HepG2 (cell line): ENCODE measurements at regions of chr1 and their contacts with region 1.

Region 1: GRCh38 chr1:100459358-100460114 is 78.4 kb upstream of the GPR88 start:
- DNase-seq: peak; percentile 66
- ATAC-seq: peak; percentile 96
- H3K4me3 ChIP-seq: no peak overlapping the region
- H3K27ac ChIP-seq: no peak overlapping the region
- H3K4me1 ChIP-seq: peaks cover 10% of the 10 kb centered on the region
- H3K27me3 ChIP-seq: no peaks in the 10 kb centered on the region
- CTCF ChIP-seq: peak; percentile 91
- EP300 ChIP-seq: no peak
- POLR2A ChIP-seq: no peak
- RAD21 ChIP-seq: peak; percentile 78

Region 2: DNA sequence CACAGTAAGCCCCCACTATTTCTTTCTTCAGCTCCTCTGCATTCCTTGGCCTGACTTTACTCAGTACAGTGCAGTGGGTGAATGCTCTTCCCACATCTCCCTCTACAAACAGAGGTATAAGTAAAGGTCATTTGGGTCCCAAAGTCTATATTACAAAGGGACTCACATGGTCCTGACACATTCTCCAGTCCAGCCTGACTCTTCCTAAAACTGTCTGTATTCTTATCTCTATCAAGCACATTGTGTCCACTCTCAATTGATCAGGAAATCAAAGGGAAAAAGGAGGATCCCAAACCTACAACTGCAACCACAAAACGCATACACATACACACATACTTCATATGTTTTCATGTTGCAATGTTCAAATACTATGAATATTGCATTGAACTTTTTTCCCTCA is 742.5 kb before region 1 on chr1:
- CTCF ChIA-PET with region 1: no interaction called
- POLR2A ChIA-PET with region 1: no interaction called
- in situ Hi-C with region 1: no loop called
- intact Hi-C with region 1: no loop called
- DNase-seq: peak; percentile 15
- ATAC-seq: peak; percentile 82
- H3K4me3 ChIP-seq: no peak overlapping the region
- H3K27ac ChIP-seq: no peak overlapping the region
- H3K4me1 ChIP-seq: peaks cover 16% of the 10 kb centered on the region
- H3K27me3 ChIP-seq: no peaks in the 10 kb centered on the region
- CTCF ChIP-seq: no peak
- EP300 ChIP-seq: no peak
- POLR2A ChIP-seq: no peak
- RAD21 ChIP-seq: no peak

Region 3: GRCh38 chr1:99808391-99809115 is 651.0 kb before region 1 on chr1:
- CTCF ChIA-PET with region 1: interaction called, 11 read pairs
- POLR2A ChIA-PET with region 1: no interaction called
- in situ Hi-C with region 1: loop called (anchors 10 kb)
- intact Hi-C with region 1: loop called (anchors 2 kb)
- DNase-seq: peak; percentile 81
- ATAC-seq: peak; percentile 95
- H3K4me3 ChIP-seq: peak overlapping the region; percentile 17 to 30 (median 24); a peak in 2 of 6 replicates
- H3K27ac ChIP-seq: no peak overlapping the region
- H3K4me1 ChIP-seq: peaks cover 13% of the 10 kb centered on the region; the same call in 1 of the 2 replicates
- H3K27me3 ChIP-seq: no peaks in the 10 kb centered on the region
- CTCF ChIP-seq: peak; percentile 85
- EP300 ChIP-seq: no peak
- POLR2A ChIP-seq: no peak
- RAD21 ChIP-seq: peak; percentile 81

Region 4: DNA sequence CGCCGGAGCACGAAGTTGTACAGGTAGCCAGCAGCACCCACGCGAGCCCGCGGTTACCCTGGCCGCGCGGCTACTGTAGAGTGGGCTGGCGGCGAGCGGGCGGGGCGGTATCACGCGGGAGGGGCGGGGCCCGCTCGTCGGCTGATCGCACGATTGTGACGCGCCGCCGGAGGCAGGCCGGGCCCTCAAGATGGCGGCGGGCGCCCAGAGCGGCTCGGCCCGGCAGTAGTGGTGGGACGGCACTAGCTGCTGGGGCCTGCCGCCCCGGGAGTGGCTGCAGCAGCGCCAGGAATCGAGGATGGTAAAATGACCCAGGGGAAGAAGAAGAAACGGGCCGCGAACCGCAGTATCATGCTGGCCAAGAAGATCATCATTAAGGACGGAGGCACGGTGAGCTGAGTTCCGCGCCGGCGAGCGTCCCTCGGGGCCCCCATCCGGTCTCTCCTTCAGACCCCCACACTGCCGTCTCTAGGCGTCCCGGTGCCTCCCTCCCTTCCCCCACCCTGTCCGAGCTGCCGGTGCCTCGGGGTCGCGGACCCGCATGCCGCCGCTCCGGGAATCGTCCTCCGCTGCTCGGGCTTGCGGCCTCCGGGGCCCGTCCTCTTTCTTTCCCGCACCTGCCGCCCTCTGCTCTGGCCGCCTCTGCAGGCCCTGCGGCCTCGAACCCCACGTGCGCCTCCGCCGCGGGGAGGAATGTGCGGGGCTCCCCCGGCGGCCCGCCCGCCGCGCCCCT is 421.4 kb before region 1 on chr1:
- CTCF ChIA-PET with region 1: no interaction called
- POLR2A ChIA-PET with region 1: no interaction called
- in situ Hi-C with region 1: no loop called
- intact Hi-C with region 1: loop called (anchors 1 kb)
- DNase-seq: peak; percentile 57
- ATAC-seq: peak; percentile 93
- H3K4me3 ChIP-seq: peak overlapping the region; percentile 91 to 99 (median 97)
- H3K27ac ChIP-seq: peak overlapping the region; percentile 94
- H3K4me1 ChIP-seq: peaks cover 58% of the 10 kb centered on the region
- H3K27me3 ChIP-seq: no peaks in the 10 kb centered on the region; a peak in 1 of 5 replicates
- CTCF ChIP-seq: no peak
- EP300 ChIP-seq: peak in 1 of 2 experiments; percentile 6; a peak in 1 of 4 replicates
- POLR2A ChIP-seq: peak; percentile 94 to 97
- RAD21 ChIP-seq: 0 out of 2 replicates have a peak, but pooled peaks have one; percentile 13

Region 5: GRCh38 chr1:100265931-100266740 is 193.4 kb before region 1 on chr1 and contains the start of gene RTCA:
- CTCF ChIA-PET with region 1: no interaction called
- POLR2A ChIA-PET with region 1: no interaction called
- in situ Hi-C with region 1: loop called (anchors 10 kb)
- intact Hi-C with region 1: loop called (anchors 5 kb)
- DNase-seq: peak; percentile 90
- ATAC-seq: peak; percentile 97
- H3K4me3 ChIP-seq: peak within 1 kb of the TSS; percentile 94 to 99 (median 98)
- H3K27ac ChIP-seq: peak within 1 kb of the TSS; percentile 89
- H3K4me1 ChIP-seq: peaks cover 39% of the 10 kb centered on the region
- H3K27me3 ChIP-seq: no peaks in the 10 kb centered on the region; a peak in 1 of 5 replicates
- CTCF ChIP-seq: no peak
- EP300 ChIP-seq: no peak
- POLR2A ChIP-seq: peak; percentile 81 to 84
- RAD21 ChIP-seq: no peak
- total RNA-seq, gene RTCA: 31.0 and 37.7 TPM in 2 replicates

Region 6: DNA sequence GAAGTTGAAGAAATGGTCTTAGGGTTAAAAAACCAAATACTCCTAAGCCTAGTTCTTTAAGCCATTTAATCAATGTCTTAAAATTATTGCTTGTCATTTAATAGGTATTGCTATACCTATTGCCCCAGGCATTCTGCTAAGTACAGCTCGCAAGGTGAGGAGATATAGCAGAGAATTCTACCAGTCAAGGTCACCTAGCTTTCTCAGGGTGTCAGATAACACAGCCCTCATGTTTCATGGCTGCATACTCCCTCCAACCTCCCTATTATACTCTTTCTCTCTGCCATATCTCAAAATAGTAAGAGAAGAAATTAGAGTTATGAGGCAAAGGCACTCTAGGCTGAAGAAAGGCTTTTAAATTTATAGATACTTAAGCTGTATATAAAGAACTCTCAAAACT is 10.0 kb after region 1 on chr1:
- CTCF ChIA-PET with region 1: no interaction called
- POLR2A ChIA-PET with region 1: no interaction called
- in situ Hi-C with region 1: no loop called
- intact Hi-C with region 1: no loop called
- DNase-seq: no peak
- ATAC-seq: no peak
- H3K4me3 ChIP-seq: no peak overlapping the region
- H3K27ac ChIP-seq: no peak overlapping the region
- H3K4me1 ChIP-seq: peaks cover 2% of the 10 kb centered on the region; the same call in 1 of the 2 replicates
- H3K27me3 ChIP-seq: no peaks in the 10 kb centered on the region
- CTCF ChIP-seq: no peak
- EP300 ChIP-seq: no peak
- POLR2A ChIP-seq: no peak
- RAD21 ChIP-seq: no peak

Region 7: DNA sequence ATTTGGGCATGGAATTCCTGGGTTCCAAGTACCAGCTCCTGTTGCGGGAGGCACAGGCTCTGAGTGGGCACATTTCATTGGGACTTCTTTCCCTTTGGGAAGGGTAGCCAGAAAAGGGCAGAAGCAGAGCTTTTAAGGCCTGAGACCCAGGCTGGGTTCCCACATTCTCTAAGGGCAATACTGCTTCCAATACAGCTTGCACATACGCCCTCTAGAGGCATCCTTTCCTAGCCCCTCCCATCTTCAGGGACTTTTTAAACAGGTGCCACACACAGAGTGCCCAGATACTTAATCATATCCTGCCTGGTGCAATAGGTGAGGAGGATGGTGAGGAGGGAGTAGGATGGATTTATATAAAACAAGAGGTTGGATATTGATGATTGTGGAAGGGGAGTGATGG is 84.1 kb after region 1 on chr1:
- CTCF ChIA-PET with region 1: interaction called, 8 read pairs
- POLR2A ChIA-PET with region 1: no interaction called
- in situ Hi-C with region 1: no loop called
- intact Hi-C with region 1: loop called (anchors 1 kb)
- DNase-seq: peak; percentile 40
- ATAC-seq: peak; percentile 90
- H3K4me3 ChIP-seq: no peak overlapping the region
- H3K27ac ChIP-seq: no peak overlapping the region
- H3K4me1 ChIP-seq: peaks cover 17% of the 10 kb centered on the region
- H3K27me3 ChIP-seq: peaks cover 0 to 5% of the 10 kb centered on the region in 2 experiments; a peak in 3 of 5 replicates
- CTCF ChIP-seq: peak; percentile 51
- EP300 ChIP-seq: no peak
- POLR2A ChIP-seq: no peak
- RAD21 ChIP-seq: 0 out of 2 replicates have a peak, but pooled peaks have one; percentile 33

Region 8: GRCh38 chr1:100866041-100866900 is 406.7 kb after region 1 on chr1:
- CTCF ChIA-PET with region 1: interaction called, 20 read pairs
- POLR2A ChIA-PET with region 1: no interaction called
- in situ Hi-C with region 1: loop called (anchors 5 kb)
- intact Hi-C with region 1: loop called (anchors 1 kb)
- DNase-seq: peak; percentile 10
- ATAC-seq: peak; percentile 50; the same call in 1 of the 3 replicates
- H3K4me3 ChIP-seq: no peak overlapping the region
- H3K27ac ChIP-seq: no peak overlapping the region
- H3K4me1 ChIP-seq: no peaks in the 10 kb centered on the region
- H3K27me3 ChIP-seq: no peaks in the 10 kb centered on the region
- CTCF ChIP-seq: peak; percentile 62
- EP300 ChIP-seq: no peak
- POLR2A ChIP-seq: no peak
- RAD21 ChIP-seq: no peak

Region 9: DNA sequence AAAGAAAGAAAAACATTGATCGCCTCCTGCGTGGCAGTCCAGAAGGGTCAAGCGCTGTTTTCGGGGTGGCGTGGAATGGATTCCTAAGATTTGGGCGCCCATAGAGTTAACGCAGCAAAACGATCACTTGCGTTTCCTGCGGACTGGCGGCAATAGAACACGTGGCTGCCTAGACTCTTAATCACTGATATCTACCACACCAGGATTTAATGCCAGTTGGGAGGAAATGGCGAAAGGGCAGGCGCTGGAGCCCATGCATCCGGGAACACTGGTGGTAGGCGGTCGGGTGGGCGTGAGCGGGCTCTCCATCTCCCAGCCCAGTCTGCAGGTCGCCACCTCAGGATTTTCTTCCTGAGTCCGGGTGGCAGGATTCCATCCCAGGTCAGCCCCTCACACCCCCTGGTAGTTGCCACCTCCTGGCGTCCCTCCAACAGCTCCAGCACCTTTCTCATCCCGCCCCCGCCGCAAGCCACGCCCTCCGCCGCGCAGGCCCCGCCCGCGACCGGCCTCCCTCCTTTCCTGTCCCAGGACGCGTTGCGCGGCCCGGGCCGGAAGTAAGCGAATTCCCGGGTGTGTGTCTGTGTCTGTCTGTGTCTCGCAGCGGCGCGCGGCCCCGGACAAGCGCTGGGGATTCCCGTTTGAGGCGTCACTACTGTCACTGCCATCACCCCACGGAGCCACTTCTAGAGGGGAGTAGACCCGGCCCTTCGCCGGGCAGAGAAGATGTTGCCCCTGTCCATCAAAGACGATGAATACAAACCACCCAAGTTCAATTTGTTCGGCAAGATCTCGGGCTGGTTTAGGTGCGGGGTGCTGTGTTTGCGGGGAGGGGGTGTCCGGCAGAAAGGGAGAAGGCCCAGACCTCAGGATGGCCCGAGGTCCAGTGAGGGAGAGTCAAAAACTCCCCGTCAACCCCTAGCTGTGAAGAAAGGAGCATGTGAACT is 436.3 kb after region 1 on chr1 and contains the start of gene SLC30A7:
- CTCF ChIA-PET with region 1: no interaction called
- POLR2A ChIA-PET with region 1: no interaction called
- in situ Hi-C with region 1: no loop called
- intact Hi-C with region 1: no loop called
- DNase-seq: peak; percentile 84
- ATAC-seq: peak; percentile 92
- H3K4me3 ChIP-seq: peak within 1 kb of the TSS; percentile 81 to 97 (median 96)
- H3K27ac ChIP-seq: peak within 1 kb of the TSS; percentile 87
- H3K4me1 ChIP-seq: peaks cover 44% of the 10 kb centered on the region
- H3K27me3 ChIP-seq: no peaks in the 10 kb centered on the region; a peak in 1 of 5 replicates
- CTCF ChIP-seq: no peak
- EP300 ChIP-seq: peak; percentile 23 to 34; a peak in 1 of 4 replicates
- POLR2A ChIP-seq: peak in 1 of 2 experiments; percentile 76; a peak in 3 of 4 replicates
- RAD21 ChIP-seq: no peak
- total RNA-seq, gene SLC30A7: 27.4 and 40.8 TPM in 2 replicates